Activated CD4-positive, alpha-beta T cell treated with anti-CD3 and anti-CD28 coated beads, Interleukin-2, amount 10 ng/mL, durations not matched to agents 24 days and 14 days (primary cell): ENCODE measurements at regions of chr2 and their contacts with region 1.

Region 1: GRCh38 chr2:157443795-157444640 is at the start of gene CYTIP:
- DNase-seq: peak; percentile 93
- H3K4me3 Mint-ChIP-seq: peak within 1 kb of the TSS; percentile 92
- H3K27ac Mint-ChIP-seq: peak within 1 kb of the TSS; percentile 97
- H3K4me1 Mint-ChIP-seq: peaks cover 50% of the 10 kb centered on the region
- H3K27me3 Mint-ChIP-seq: no peaks in the 10 kb centered on the region
- total RNA-seq, gene CYTIP: 320 and 321 TPM in 2 replicates

Region 2: DNA sequence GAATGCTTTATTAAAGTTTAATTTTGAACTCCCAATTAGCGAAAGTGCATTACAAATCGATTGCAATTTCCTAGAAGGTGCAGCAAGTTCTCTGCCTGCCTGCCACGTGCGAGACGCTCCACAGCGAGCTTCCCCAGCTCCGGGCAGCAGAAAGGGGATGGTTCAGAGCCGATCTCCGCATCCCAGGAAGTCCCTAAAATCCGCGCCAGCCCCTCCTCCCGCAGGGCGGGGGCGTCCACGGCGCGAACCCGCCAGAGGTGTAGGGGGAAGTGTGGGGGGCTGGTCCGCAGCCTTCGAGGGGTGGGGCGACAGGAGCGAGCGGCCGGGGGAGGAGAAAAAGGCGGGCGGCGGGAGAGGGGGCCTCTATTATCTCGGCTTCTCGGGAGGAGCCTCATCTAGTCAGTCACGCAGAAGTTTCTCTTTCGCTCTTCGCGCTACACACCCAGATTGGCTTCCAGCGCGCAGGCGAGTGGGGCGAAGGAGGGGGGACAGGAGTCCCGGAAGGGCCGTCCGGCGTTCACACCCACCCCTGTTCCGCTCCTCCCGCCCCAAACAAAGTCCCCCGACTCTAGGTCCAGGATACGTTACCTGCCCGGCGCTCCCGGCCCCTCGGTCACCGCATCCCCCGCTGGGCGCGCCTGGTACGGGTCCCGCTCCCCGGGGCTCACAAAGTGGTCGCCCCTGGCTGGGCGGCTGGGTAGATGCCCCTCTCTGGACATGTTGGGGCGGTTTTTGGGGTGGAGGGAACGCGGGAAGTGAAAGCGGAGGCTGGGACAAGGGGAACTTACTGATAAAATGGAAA is 1102.4 kb before region 1 on chr2:
- intact Hi-C with region 1: loop called (anchors 5 kb)
- DNase-seq: peak; percentile 96
- H3K4me3 Mint-ChIP-seq: peak overlapping the region; percentile 93
- H3K27ac Mint-ChIP-seq: peak overlapping the region; percentile 99
- H3K4me1 Mint-ChIP-seq: peaks cover 48% of the 10 kb centered on the region
- H3K27me3 Mint-ChIP-seq: no peaks in the 10 kb centered on the region

Region 3: DNA sequence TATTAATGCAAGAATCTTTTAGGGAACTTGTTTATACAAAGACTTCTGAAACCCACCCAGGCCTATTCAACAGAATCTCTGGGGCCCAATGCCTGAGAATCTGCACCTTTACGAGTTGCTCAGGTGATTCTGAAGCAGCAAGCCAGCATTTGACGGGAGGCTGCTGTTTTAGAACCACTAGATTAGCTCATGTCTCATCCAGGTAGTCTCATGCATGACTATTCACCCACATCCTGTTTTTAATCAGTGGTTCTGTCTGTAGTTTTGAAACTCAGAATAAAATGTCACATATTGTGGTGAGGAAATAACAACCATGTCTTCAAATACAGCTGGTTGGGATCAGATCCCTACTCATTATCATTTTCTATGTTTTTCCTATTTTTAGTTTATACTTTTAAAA is 39.7 kb before region 1 on chr2:
- intact Hi-C with region 1: loop called (anchors 5 kb)
- DNase-seq: peak; percentile 91
- H3K4me3 Mint-ChIP-seq: peak overlapping the region; percentile 71
- H3K27ac Mint-ChIP-seq: peak overlapping the region; percentile 88
- H3K4me1 Mint-ChIP-seq: peaks cover 53% of the 10 kb centered on the region
- H3K27me3 Mint-ChIP-seq: no peaks in the 10 kb centered on the region

Region 4: GRCh38 chr2:157420771-157421323 is 23.2 kb before region 1 on chr2:
- intact Hi-C with region 1: loop called (anchors 1 kb)
- DNase-seq: peak; percentile 78
- H3K4me3 Mint-ChIP-seq: peak overlapping the region; percentile 24
- H3K27ac Mint-ChIP-seq: peak overlapping the region; percentile 84
- H3K4me1 Mint-ChIP-seq: peaks cover 59% of the 10 kb centered on the region
- H3K27me3 Mint-ChIP-seq: no peaks in the 10 kb centered on the region

Region 5: GRCh38 chr2:157468931-157469708 is 25.1 kb after region 1 on chr2:
- intact Hi-C with region 1: loop called (anchors 1 kb)
- DNase-seq: peak; percentile 82
- H3K4me3 Mint-ChIP-seq: peak overlapping the region; percentile 78
- H3K27ac Mint-ChIP-seq: peak overlapping the region; percentile 97
- H3K4me1 Mint-ChIP-seq: peaks cover 82% of the 10 kb centered on the region
- H3K27me3 Mint-ChIP-seq: no peaks in the 10 kb centered on the region

Region 6: GRCh38 chr2:157628477-157629415 is 184.7 kb after region 1 on chr2 and contains the start of gene ACVR1C:
- intact Hi-C with region 1: loop called (anchors 5 kb)
- DNase-seq: peak; percentile 90
- H3K4me3 Mint-ChIP-seq: peak within 1 kb of the TSS; percentile 91
- H3K27ac Mint-ChIP-seq: peak within 1 kb of the TSS; percentile 66
- H3K4me1 Mint-ChIP-seq: peaks cover 24% of the 10 kb centered on the region
- H3K27me3 Mint-ChIP-seq: peaks cover 27% of the 10 kb centered on the region
- total RNA-seq, gene ACVR1C: 0.98 and 1.0 TPM in 2 replicates